ENCODE measurements at regions of chr10 and their contacts with region 1.

Region 1: DNA sequence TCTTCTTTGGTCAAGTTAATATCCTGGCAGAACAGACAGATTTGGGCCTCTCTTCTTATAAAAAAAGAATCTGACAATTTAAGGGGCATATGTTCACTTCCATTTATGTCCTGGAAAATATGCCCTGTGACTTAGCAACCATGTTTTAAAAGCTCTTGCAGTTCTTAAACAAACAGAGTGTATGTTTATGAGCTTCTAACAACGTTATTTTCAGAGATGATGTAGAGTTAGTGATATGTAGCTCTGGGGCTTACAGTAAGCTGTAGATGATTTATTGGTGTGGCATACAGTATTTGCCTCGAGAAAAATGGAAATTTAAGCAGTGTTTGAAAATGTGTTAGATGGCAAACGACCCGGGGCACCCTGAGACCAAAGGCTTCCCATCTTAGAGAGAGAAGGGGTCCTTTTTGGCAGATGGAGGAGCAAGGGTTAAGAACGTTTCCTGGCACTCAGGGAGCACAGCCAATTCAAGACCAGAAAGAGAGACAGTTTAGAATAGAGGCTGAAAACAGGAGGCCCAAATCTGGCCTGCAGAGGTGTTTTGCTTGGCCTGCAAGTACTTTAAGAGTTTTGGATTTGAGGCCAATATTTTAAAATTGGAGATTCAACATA is 397.5 kb downstream of the KCNMA1 start:
- DNase-seq: peak; percentile 12
- H3K4me3 ChIP-seq: no peak overlapping the region
- H3K27ac ChIP-seq: peak overlapping the region; percentile 34 to 77
- H3K4me1 ChIP-seq: no peaks in the 10 kb centered on the region
- H3K27me3 ChIP-seq: no peaks in the 10 kb centered on the region
- CTCF ChIP-seq: no peak
- POLR2A ChIP-seq: no peak

Region 2: DNA sequence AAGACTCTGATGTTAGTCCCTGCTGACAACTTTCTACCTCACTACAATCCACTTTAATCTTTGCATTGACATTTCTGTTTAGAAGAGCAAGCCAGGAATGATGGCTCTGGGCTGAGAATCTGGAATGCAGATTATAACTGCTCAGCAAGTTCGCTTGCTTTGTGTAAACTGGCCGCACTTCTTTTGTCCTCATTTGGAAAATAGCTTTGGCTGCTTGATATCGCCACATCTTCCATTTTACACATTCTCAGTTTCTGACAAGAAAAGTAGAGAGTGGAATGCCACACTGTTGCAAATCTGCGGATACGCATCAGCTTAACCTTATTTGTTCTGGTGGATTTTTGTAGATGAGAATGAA is 32.3 kb before region 1 on chr10:
- intact Hi-C with region 1: loop called (anchors 5 kb)
- DNase-seq: no peak
- H3K4me3 ChIP-seq: no peak overlapping the region
- H3K27ac ChIP-seq: no peak overlapping the region
- H3K4me1 ChIP-seq: no peaks in the 10 kb centered on the region
- H3K27me3 ChIP-seq: no peaks in the 10 kb centered on the region
- CTCF ChIP-seq: no peak
- POLR2A ChIP-seq: no peak

Region 3: DNA sequence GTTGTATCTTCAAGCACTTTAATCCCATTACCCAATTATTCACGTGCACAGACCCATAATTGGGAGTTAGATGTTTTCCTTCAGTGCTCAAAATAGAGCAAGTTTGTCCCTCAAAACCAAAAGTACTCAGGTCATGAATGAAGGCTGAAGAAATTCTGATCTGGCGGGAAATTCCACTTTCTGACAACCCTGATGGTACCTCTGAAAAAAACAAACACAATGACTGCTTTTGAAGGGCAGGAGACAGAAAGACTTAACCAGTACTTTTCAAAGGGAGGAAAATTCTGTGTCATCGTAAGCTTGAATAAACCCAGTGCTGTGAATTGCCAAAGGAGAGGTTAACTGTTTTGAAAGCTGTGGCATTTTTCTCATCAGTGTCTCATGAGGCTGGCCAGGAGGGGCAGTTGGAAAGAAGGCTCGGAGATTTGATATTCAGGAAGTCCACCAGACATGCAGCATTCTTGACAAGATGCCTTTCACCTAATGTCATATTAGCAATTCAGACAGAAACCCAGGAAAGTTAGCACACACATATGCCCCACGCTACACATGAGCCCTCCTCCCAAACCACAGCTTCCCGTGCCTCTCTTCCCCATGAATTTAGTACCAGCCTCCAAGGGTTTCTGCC is 50.5 kb after region 1 on chr10:
- intact Hi-C with region 1: loop called (anchors 5 kb)
- DNase-seq: no peak
- H3K4me3 ChIP-seq: no peak overlapping the region
- H3K27ac ChIP-seq: no peak overlapping the region
- H3K4me1 ChIP-seq: peaks cover 8% of the 10 kb centered on the region
- H3K27me3 ChIP-seq: no peaks in the 10 kb centered on the region
- CTCF ChIP-seq: no peak
- POLR2A ChIP-seq: no peak